Naive thymus-derived CD4-positive, alpha-beta T cell (primary cell): ENCODE measurements at regions of chr6 and their contacts with region 1.

Region 1: GRCh38 chr6:169212897-169213813 is 40.5 kb downstream of the THBS2 start:
- DNase-seq: peak; percentile 82 to 94 (median 91)
- ATAC-seq: peak; percentile 99
- H3K4me3 ChIP-seq: peak overlapping the region; percentile 13
- H3K4me3 Mint-ChIP-seq: peak overlapping the region; percentile 53 to 82 (median 68)
- H3K27ac ChIP-seq: peak overlapping the region; percentile 56
- H3K27ac Mint-ChIP-seq: peak overlapping the region; percentile 53 to 90 (median 81)
- H3K4me1 ChIP-seq: peaks cover 4 to 8% of the 10 kb centered on the region in 2 donors
- H3K4me1 Mint-ChIP-seq: peaks cover 0 to 30% (median 16%) of the 10 kb centered on the region in 7 donors
- H3K27me3 ChIP-seq: no peaks in the 10 kb centered on the region
- H3K27me3 Mint-ChIP-seq: peaks cover 0 to 4% (median 0%) of the 10 kb centered on the region in 5 donors

Region 2: DNA sequence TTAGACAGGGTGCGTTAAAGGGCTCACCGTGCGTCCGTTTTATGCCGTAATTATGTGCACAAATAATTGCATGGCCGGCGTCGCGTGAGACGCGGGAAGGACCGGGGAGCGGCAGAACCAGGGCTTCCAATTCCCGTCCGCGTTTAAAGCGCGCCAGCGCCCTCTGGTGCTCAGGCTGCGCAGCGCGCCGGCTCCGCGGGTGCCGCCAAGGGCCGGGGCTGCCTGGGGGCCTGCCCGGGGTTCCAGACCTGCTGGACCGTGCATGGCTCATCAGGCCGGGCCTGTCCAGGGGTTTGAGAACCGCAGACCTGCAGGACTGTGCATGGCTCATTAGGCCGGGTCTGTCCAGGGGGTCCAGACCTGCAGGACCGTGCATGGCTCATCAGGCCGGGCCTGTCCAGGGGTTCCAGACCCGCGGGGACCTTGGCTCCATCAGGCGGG is 328.5 kb before region 1 on chr6:
- CTCF ChIA-PET with region 1: no interaction called
- POLR2A ChIA-PET with region 1: no interaction called
- intact Hi-C with region 1: loop called in 1 of 2 experiments (anchors 1 kb)
- DNase-seq: peak; percentile 49 to 86 (median 82)
- ATAC-seq: peak; percentile 91
- H3K4me3 ChIP-seq: peak overlapping the region; percentile 61
- H3K4me3 Mint-ChIP-seq: peak overlapping the region; percentile 70 to 95 (median 90)
- H3K27ac ChIP-seq: peak overlapping the region; percentile 56
- H3K27ac Mint-ChIP-seq: peak overlapping the region; percentile 86 to 95 (median 91)
- H3K4me1 ChIP-seq: peaks cover 8 to 9% of the 10 kb centered on the region in 2 donors
- H3K4me1 Mint-ChIP-seq: peaks cover 7 to 13% (median 9%) of the 10 kb centered on the region in 7 donors
- H3K27me3 ChIP-seq: no peaks in the 10 kb centered on the region
- H3K27me3 Mint-ChIP-seq: peaks cover 0 to 12% (median 0%) of the 10 kb centered on the region in 5 donors

Region 3: DNA sequence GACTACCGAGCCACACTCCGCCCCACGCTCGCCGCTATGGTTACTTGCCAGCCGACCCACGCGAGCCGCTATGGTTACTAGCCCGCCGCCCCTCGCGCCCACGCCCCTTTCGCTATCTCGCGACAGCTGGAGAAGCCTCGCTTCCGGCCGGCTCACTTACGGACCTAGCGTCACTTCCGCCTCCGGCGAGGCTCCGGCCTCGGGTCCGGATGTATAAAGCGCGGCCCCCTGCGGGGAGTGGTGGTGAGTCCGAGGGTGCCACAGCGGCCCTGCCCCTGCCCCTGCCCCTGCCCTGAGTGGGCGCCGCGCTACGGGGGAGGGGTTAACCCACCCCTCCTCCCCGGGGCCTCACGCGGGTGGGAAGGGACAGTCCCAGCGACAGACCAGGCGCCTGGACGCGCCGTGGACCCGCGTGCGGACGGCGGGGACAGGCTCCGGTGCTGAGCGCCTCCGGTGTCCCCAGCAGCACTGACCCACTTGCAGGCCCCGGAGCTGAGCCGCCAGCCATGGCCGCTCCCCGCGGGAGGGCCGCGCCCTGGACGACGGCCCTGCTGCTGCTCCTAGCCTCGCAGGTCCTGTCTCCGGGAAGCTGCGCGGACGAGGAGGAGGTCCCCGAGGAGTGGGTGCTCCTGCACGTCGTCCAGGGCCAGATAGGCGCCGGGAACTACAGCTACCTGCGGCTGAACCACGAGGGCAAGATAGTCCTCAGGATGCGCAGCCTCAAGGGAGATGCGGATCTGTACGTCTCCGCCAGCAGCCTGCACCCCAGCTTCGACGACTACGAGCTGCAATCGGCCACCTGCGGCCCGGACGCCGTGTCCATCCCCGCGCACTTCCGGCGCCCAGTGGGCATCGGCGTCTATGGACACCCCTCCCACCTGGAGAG is 489.0 kb after region 1 on chr6 and contains the starts of genes C6orf120 and WDR27:
- CTCF ChIA-PET with region 1: no interaction called
- POLR2A ChIA-PET with region 1: interaction called, 4 read pairs
- intact Hi-C with region 1: loop called in 1 of 2 experiments (anchors 2 kb)
- DNase-seq: peak; percentile 91 to 98 (median 94)
- ATAC-seq: peak; percentile 93
- H3K4me3 ChIP-seq: peak within 1 kb of the TSS; percentile 95
- H3K4me3 Mint-ChIP-seq: peak within 1 kb of the TSS; percentile 89 to 94 (median 92)
- H3K27ac ChIP-seq: peak within 1 kb of the TSS; percentile 98
- H3K27ac Mint-ChIP-seq: peak within 1 kb of the TSS; percentile 88 to 96 (median 93)
- H3K4me1 ChIP-seq: peaks cover 22 to 36% of the 10 kb centered on the region in 2 donors
- H3K4me1 Mint-ChIP-seq: peaks cover 28 to 66% (median 55%) of the 10 kb centered on the region in 7 donors
- H3K27me3 ChIP-seq: no peaks in the 10 kb centered on the region
- H3K27me3 Mint-ChIP-seq: no peaks in the 10 kb centered on the region
- total RNA-seq, gene C6orf120: 16.0 to 38.1 (median 19.3) TPM
- total RNA-seq, gene WDR27: 22.7 to 89.0 (median 41.4) TPM

Region 4: GRCh38 chr6:170554013-170554795 is 1341.0 kb after region 1 on chr6 and contains the start of gene TBP:
- CTCF ChIA-PET with region 1: no interaction called
- POLR2A ChIA-PET with region 1: no interaction called
- intact Hi-C with region 1: loop called (anchors 2 to 5 kb)
- DNase-seq: peak; percentile 90 to 99 (median 97)
- ATAC-seq: peak; percentile 95
- H3K4me3 ChIP-seq: peak within 1 kb of the TSS; percentile 91
- H3K4me3 Mint-ChIP-seq: no peak within 1 kb of the TSS
- H3K27ac ChIP-seq: peak within 1 kb of the TSS; percentile 93
- H3K27ac Mint-ChIP-seq: no peak within 1 kb of the TSS
- H3K4me1 ChIP-seq: peaks cover 38% of the 10 kb centered on the region in 2 donors
- H3K4me1 Mint-ChIP-seq: peaks cover 16 to 46% (median 30%) of the 10 kb centered on the region in 7 donors
- H3K27me3 ChIP-seq: no peaks in the 10 kb centered on the region
- H3K27me3 Mint-ChIP-seq: no peaks in the 10 kb centered on the region
- total RNA-seq, gene TBP: 13.8 to 28.3 (median 23.9) TPM